MCF 10A (cell line): ENCODE measurements at regions of chr13 and their contacts with region 1.

Region 1: DNA sequence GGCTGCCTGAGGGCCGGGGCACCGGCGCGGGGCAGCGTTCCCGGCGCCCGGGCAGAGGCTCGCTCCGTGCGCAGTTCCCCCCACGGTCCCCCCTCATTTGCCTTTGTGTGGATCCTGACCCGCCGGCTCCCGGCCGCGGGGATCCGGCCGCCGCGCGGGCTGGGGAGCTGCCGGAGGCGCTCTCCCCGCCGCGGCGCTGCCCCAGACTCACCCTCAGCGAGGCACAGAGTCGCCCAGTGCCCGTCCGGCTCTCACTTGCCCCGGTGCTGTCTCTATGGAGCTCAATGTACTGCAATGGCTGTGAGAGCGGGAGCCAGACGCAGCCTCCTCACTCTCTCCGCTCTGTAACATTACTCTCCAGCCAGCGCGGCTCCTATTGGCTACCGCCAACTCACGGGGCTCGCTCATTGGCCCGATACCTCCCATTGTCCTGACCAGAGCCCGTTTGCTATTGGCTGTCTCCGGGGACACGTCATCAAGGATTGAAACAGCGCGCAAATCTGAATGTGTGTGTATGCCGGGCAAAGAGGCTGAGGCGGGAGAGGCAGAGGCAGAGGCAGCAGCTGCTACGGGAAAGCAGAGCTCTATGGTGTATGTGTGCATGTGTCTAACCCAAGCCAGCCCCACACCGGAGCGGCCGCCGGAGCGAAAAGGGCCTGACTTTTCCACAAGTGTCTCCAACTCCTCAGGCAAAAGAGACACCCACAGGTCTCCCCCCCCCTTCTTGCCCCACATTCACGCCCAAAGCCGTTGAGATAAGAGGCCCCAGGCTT is at the start of gene HMGB1:
- DNase-seq: peak; percentile 99
- H3K4me3 Mint-ChIP-seq: peak within 1 kb of the TSS; percentile 89
- H3K27ac Mint-ChIP-seq: peak within 1 kb of the TSS; percentile 97
- H3K4me1 Mint-ChIP-seq: peaks cover 11% of the 10 kb centered on the region
- H3K27me3 Mint-ChIP-seq: no peaks in the 10 kb centered on the region
- CTCF ChIP-seq: no peak
- total RNA-seq, gene HMGB1: 302 and 307 TPM in 2 replicates

Region 2: GRCh38 chr13:30132623-30133553 is 332.9 kb before region 1 on chr13:
- CTCF ChIA-PET with region 1: interaction called, 36 read pairs
- POLR2A ChIA-PET with region 1: interaction called, 9 read pairs
- intact Hi-C with region 1: loop called (anchors 1 kb)
- DNase-seq: peak; percentile 91
- H3K4me3 Mint-ChIP-seq: no peak overlapping the region
- H3K27ac Mint-ChIP-seq: peak overlapping the region; percentile 20
- H3K4me1 Mint-ChIP-seq: peaks cover 18% of the 10 kb centered on the region
- H3K27me3 Mint-ChIP-seq: no peaks in the 10 kb centered on the region
- CTCF ChIP-seq: peak; percentile 89

Region 3: DNA sequence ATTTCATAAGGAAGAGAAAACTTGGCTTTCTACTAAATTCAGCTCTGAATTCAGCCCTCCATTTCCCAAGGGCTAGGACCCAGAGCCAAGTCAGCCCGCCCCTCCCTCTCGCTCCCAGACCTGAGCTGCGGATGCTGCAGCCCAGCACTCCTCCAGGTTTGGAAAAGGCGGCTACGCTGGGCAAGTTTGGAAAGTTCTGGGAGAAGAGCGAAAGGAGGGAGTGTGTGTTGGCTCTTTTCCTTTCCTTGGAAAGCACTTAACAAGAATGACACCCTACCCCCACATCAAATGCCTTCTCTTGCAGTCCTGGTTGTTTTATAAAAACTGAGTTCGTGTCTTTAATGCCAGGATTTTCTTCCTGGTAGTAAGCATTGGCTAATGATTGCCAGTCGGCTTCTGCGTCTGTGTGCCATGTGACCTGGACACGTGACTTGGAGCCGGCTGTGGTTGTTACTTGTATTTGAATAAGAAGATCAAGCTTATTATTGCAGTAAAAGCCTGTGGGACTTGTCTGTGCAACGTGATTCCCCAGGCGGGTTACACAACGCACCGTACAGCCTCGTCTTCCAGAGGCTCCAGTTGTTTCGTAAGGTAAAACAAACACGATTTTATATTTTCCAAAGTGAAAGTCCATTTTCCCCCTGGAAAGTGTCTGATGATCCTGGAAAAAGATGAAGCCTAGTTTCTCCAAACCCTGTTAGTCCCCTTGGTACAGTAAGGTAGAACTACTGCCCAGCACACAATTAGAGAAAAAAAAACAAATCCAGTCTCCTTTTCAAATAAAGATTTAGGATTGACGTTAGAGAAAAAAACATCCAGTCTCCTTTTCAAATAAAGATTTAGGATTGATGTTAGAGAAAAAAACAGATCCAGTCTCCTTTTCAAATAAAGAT is 70.3 kb before region 1 on chr13:
- CTCF ChIA-PET with region 1: interaction called, 3 read pairs
- POLR2A ChIA-PET with region 1: interaction called, 14 read pairs
- intact Hi-C with region 1: no loop called
- DNase-seq: peak; percentile 94
- H3K4me3 Mint-ChIP-seq: peak overlapping the region; percentile 80
- H3K27ac Mint-ChIP-seq: peak overlapping the region; percentile 93
- H3K4me1 Mint-ChIP-seq: peaks cover 10% of the 10 kb centered on the region
- H3K27me3 Mint-ChIP-seq: no peaks in the 10 kb centered on the region
- CTCF ChIP-seq: no peak

Region 4: DNA sequence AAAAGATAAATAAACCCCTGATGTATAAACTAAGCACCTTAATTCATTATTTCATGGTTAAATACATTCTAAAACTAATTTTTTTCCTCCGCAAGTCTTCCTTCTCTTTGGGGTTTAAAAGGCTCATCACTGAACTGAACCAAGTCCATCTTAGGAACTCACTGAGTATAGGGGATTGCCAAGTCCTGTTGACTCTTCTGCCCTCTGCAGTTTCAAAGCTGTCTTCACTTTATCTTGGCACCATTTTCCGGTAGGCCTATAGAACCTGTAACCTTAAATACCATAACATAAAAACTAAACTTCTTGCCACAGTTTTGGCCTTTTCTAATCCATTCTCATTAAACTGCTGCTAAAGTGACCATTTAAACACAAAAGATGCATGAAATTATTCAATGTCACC is 85.4 kb after region 1 on chr13:
- CTCF ChIA-PET with region 1: no interaction called
- POLR2A ChIA-PET with region 1: interaction called, 3 read pairs
- intact Hi-C with region 1: loop called (anchors 5 kb)
- DNase-seq: peak; percentile 54
- H3K4me3 Mint-ChIP-seq: no peak overlapping the region
- H3K27ac Mint-ChIP-seq: no peak overlapping the region
- H3K4me1 Mint-ChIP-seq: no peaks in the 10 kb centered on the region
- H3K27me3 Mint-ChIP-seq: no peaks in the 10 kb centered on the region
- CTCF ChIP-seq: peak; percentile 17

Region 5: DNA sequence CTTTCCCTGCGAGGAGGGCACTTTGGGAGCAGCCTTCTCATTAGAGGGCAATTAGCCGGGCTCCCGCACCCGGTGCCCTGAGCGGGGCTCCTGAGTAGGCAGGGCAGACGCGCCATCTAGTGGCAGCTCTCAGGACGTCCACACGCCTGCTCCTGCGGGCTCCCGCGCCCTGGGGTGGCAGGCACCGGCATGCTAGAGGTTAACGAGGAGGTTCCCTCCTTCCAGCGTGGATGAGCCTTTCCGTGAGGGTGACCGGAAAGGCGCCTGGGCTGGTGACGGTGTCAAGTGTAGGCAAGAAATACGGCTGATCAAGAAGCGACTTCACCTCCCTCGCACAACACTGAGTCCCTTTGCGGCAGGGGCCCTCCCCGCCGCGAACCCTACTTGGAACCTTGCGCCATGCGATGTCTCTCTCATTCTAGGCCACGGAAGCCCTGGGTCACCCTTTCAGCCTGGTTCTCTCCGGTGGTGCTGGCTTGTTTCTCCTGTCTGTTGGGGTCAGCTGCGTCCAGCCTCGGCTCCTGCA is 337.2 kb after region 1 on chr13:
- CTCF ChIA-PET with region 1: interaction called, 4 read pairs
- POLR2A ChIA-PET with region 1: no interaction called
- intact Hi-C with region 1: loop called (anchors 1 kb)
- DNase-seq: peak; percentile 80
- H3K4me3 Mint-ChIP-seq: peak overlapping the region; percentile 68
- H3K27ac Mint-ChIP-seq: peak overlapping the region; percentile 7
- H3K4me1 Mint-ChIP-seq: peaks cover 11% of the 10 kb centered on the region
- H3K27me3 Mint-ChIP-seq: no peaks in the 10 kb centered on the region
- CTCF ChIP-seq: peak; percentile 96